ENCODE measurements at regions of chr16 and their contacts with region 1.

Region 1: GRCh38 chr16:70251629-70252354 is at the start of gene EXOSC6:
- DNase-seq: peak; percentile 89 to 95 (median 91)
- H3K4me3 ChIP-seq: peak within 1 kb of the TSS; percentile 66
- H3K4me3 Mint-ChIP-seq: peak within 1 kb of the TSS; percentile 87 to 97 (median 90)
- H3K27ac ChIP-seq: peak within 1 kb of the TSS; percentile 70
- H3K27ac Mint-ChIP-seq: peak within 1 kb of the TSS; percentile 72 to 98 (median 94)
- H3K4me1 ChIP-seq: peaks cover 19% of the 10 kb centered on the region
- H3K4me1 Mint-ChIP-seq: peaks cover 22 to 33% (median 28%) of the 10 kb centered on the region in 3 donors
- H3K27me3 ChIP-seq: no peaks in the 10 kb centered on the region
- H3K27me3 Mint-ChIP-seq: no peaks in the 10 kb centered on the region
- total RNA-seq, gene EXOSC6: 43.1 to 44.5 TPM

Region 2: GRCh38 chr16:70267516-70267915 is 15.7 kb after region 1 on chr16:
- CTCF ChIA-PET with region 1: interaction called, 15 read pairs
- POLR2A ChIA-PET with region 1: no interaction called
- DNase-seq: peak in 1 of 5 donors; percentile 46
- H3K4me3 ChIP-seq: no peak overlapping the region
- H3K4me3 Mint-ChIP-seq: no peak overlapping the region
- H3K27ac ChIP-seq: no peak overlapping the region
- H3K27ac Mint-ChIP-seq: peak overlapping the region in 2 of 8 donors; percentile 15 to 38
- H3K4me1 ChIP-seq: no peaks in the 10 kb centered on the region
- H3K4me1 Mint-ChIP-seq: no peaks in the 10 kb centered on the region
- H3K27me3 ChIP-seq: no peaks in the 10 kb centered on the region
- H3K27me3 Mint-ChIP-seq: no peaks in the 10 kb centered on the region

Region 3: DNA sequence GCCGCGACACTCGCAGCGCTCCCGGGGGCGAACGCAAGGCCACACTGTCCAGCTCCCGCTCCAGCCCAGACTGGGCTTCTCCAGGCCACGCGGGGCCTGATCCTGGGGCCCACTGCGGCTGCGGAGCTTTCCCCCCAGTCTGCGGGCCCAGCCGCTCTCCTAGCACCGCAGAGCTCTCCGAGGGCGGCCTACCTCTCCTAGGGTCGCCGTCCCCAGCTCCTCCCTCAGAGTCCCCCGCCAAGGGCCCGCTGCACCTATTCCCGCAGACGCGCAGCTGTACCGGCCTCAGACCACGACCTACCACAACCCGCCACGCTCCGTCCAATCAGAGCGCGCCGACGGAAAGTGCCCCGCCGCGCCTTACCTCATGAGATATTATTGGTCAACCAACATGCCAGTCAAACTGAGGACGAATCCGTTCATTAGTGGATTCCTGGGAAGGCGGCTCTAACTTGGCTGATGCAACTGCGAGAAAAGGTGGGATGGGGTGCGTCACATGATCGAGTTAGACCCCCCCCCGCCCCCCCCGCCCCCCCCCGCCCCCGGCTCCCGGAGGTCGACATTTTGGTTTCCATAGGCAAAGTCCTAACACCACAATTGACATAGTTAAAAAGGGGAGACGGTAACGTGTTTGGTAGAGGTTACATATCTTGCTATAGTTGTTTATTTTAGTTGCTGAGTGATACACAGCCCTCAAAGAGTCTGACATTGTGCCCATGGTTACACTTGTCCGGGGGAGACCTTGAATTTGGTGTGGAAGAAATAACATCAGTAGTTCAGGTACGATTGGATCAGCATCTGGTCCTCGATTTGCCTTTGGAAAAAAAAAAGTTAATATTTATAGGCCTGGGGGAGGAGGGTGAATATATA is 37.7 kb after region 1 on chr16 and contains the start of gene AARS1:
- CTCF ChIA-PET with region 1: interaction called, 6 read pairs
- POLR2A ChIA-PET with region 1: interaction called, 12 read pairs
- DNase-seq: peak; percentile 92 to 97 (median 96)
- H3K4me3 ChIP-seq: peak within 1 kb of the TSS; percentile 67
- H3K4me3 Mint-ChIP-seq: peak within 1 kb of the TSS; percentile 90 to 98 (median 97)
- H3K27ac ChIP-seq: peak within 1 kb of the TSS; percentile 93
- H3K27ac Mint-ChIP-seq: peak within 1 kb of the TSS; percentile 67 to 100 (median 96)
- H3K4me1 ChIP-seq: peaks cover 8% of the 10 kb centered on the region
- H3K4me1 Mint-ChIP-seq: peaks cover 12 to 25% (median 24%) of the 10 kb centered on the region in 3 donors
- H3K27me3 ChIP-seq: no peaks in the 10 kb centered on the region
- H3K27me3 Mint-ChIP-seq: peaks cover 0 to 2% of the 10 kb centered on the region in 2 donors
- total RNA-seq, gene AARS1: 135 to 136 TPM